Activated T-helper 1 cell treated with anti-CD3 and anti-CD28 coated beads, Interleukin-12 subunit alpha, Interleukin-12 subunit beta, Interleukin-2, Interleukin-4 antibody, amounts not matched to agents 30 ng/mL and 10 ng/mL and 1 ng/mL, durations not matched to agents 14 hours and 24 hours and 36 hours (primary cell): ENCODE measurements at regions of chr20 and their contacts with region 1.

Region 1: GRCh38 chr20:51500311-51500710 is 42.2 kb downstream of the NFATC2 start:
- DNase-seq: peak; percentile 48
- H3K4me3 Mint-ChIP-seq: no peak overlapping the region
- H3K27ac Mint-ChIP-seq: peak overlapping the region; percentile 81
- H3K4me1 Mint-ChIP-seq: peaks cover 86% of the 10 kb centered on the region
- H3K27me3 Mint-ChIP-seq: no peaks in the 10 kb centered on the region

Region 2: DNA sequence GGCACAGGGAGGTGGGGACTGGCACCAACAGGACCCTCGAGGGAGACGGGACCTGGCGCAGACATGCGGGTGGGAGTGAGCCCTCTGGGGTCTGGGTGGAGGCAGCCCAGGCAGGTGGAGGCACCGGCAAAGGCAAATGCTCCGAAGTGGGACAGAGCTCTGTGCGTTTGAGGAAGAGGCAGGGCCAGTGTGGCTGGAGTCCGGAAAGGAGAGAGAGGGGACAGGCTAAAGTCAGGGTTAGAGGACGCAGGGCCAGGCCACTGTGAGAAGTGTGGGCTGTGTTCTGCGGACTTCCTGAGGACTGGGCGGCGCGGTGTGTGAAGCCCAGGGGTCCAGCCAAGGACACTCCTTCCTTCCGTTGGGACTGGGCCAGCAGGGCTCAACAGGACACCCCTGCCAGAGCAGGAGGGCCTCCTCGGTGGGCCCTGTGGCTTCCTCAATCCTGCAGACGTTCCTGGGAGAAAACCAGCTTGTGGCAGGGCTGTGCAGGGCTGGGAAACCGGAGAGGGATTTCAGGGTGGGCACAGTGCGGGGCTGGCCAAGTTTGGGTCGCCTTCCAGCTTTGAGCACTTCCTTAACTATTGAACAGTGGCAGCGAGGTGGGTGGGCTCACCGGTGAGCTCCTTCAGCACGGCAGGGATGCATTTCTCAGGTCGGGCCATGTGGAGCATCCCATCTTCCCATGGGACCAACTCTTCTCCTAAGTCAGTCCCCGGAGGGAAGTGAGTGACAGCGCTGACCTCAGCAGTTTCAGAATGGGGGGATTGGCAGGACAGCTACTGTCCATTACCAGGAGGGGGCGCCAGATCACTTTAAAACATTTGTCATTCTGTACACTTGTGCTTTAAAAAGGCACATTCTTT is 519.2 kb before region 1 on chr20:
- intact Hi-C with region 1: loop called (anchors 5 kb)
- DNase-seq: peak; percentile 30
- H3K4me3 Mint-ChIP-seq: no peak overlapping the region
- H3K27ac Mint-ChIP-seq: peak overlapping the region; percentile 93
- H3K4me1 Mint-ChIP-seq: peaks cover 16% of the 10 kb centered on the region
- H3K27me3 Mint-ChIP-seq: peaks cover 12% of the 10 kb centered on the region

Region 3: GRCh38 chr20:51385646-51386530 is 114.4 kb before region 1 on chr20:
- intact Hi-C with region 1: loop called (anchors 1 kb)
- DNase-seq: no peak
- H3K4me3 Mint-ChIP-seq: peak overlapping the region; percentile 50
- H3K27ac Mint-ChIP-seq: no peak overlapping the region
- H3K4me1 Mint-ChIP-seq: peaks cover 78% of the 10 kb centered on the region
- H3K27me3 Mint-ChIP-seq: no peaks in the 10 kb centered on the region

Region 4: DNA sequence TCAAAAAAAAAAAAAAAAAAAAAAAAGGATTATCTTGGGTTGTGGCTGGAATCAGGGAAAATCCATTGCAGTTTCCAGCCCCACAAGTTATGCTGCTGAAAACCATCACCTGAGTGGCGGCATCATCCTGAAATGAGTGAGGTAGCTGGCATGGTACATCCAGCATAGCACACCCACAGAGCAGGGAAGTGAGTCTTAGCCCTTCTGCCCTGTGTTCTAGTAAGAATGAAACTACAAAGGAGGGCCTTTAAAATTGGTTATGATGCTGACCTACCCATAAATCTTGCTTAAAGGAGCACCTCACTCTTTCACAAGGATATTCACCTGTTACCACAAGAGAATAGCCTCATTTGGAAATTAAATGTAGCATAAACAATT is 77.0 kb before region 1 on chr20:
- intact Hi-C with region 1: loop called (anchors 1 kb)
- DNase-seq: no peak
- H3K4me3 Mint-ChIP-seq: peak overlapping the region; percentile 22
- H3K27ac Mint-ChIP-seq: peak overlapping the region; percentile 72
- H3K4me1 Mint-ChIP-seq: peaks cover 77% of the 10 kb centered on the region
- H3K27me3 Mint-ChIP-seq: no peaks in the 10 kb centered on the region

Region 5: DNA sequence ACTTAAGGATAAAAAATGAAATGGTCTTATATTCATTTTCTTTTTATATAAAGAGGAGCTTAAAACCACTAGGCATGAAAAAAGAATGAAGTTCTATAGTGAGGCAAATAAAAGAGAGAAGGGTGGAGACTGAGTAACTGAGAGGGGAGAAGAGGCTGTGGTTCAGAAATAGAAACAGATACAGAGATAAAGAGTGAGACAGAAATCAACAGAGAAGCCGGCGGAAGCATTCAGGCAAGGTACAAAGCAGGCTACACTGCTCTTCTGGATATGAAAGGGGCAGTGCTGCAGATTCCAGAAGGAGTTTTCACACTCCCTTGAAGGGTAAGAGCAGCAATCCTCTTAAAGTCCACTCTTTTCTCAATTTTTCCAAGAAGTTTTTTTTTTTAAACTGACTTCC is 12.3 kb after region 1 on chr20:
- intact Hi-C with region 1: loop called (anchors 1 kb)
- DNase-seq: no peak
- H3K4me3 Mint-ChIP-seq: peak overlapping the region; percentile 1
- H3K27ac Mint-ChIP-seq: peak overlapping the region; percentile 70
- H3K4me1 Mint-ChIP-seq: peaks cover 70% of the 10 kb centered on the region
- H3K27me3 Mint-ChIP-seq: no peaks in the 10 kb centered on the region

Region 6: GRCh38 chr20:51531141-51531710 is 30.9 kb after region 1 on chr20:
- intact Hi-C with region 1: loop called (anchors 1 kb)
- DNase-seq: peak; percentile 58
- H3K4me3 Mint-ChIP-seq: peak overlapping the region; percentile 84
- H3K27ac Mint-ChIP-seq: peak overlapping the region; percentile 99
- H3K4me1 Mint-ChIP-seq: peaks cover 92% of the 10 kb centered on the region
- H3K27me3 Mint-ChIP-seq: no peaks in the 10 kb centered on the region

Region 7: GRCh38 chr20:51661609-51662178 is 161.4 kb after region 1 on chr20:
- intact Hi-C with region 1: loop called (anchors 1 kb)
- DNase-seq: peak; percentile 20
- H3K4me3 Mint-ChIP-seq: peak overlapping the region; percentile 5
- H3K27ac Mint-ChIP-seq: peak overlapping the region; percentile 58
- H3K4me1 Mint-ChIP-seq: peaks cover 24% of the 10 kb centered on the region
- H3K27me3 Mint-ChIP-seq: no peaks in the 10 kb centered on the region